MCF 10A (cell line): ENCODE measurements at regions of chr5 and their contacts with region 1.

Region 1: GRCh38 chr5:141849375-141850243 is 28.6 kb downstream of the PCDH1 start:
- DNase-seq: peak; percentile 88
- H3K4me3 Mint-ChIP-seq: peak overlapping the region; percentile 81
- H3K27ac Mint-ChIP-seq: peak overlapping the region; percentile 75
- H3K4me1 Mint-ChIP-seq: peaks cover 16% of the 10 kb centered on the region
- H3K27me3 Mint-ChIP-seq: no peaks in the 10 kb centered on the region
- CTCF ChIP-seq: no peak

Region 2: DNA sequence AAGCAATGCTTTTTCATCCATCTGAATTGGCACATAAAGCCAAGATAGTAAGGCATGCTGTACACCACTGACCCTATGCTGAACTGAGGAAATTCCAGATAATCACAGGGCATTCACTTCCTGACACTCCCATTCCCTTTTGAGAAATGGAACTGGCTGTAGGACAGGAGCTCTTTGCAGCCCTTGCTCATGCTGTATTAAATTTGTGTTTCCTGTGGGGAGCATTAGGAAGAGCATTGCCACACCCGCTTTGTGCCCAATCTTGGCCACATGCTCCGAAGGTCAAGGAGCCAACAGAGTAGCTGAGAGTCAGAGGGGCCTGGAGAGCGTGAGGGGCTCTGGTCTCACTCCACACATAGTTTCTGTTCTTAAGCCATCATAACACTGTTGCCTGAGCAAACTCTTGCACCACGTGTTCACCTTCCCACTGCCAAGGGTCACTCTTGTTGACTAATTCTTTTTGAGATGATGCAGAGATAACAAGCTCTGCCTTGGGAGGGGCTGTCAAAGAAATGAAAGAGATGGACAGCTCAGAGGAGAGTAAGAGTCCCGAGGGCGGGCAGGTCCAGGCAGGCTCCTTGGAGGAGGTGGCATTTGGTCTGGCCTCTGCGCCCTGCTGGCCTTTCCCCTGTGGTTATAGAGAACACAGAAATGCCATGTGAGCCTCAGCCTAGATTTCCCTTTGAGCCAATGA is 135.8 kb before region 1 on chr5:
- CTCF ChIA-PET with region 1: no interaction called
- POLR2A ChIA-PET with region 1: interaction called, 12 read pairs
- intact Hi-C with region 1: no loop called
- DNase-seq: peak; percentile 96
- H3K4me3 Mint-ChIP-seq: peak overlapping the region; percentile 5
- H3K27ac Mint-ChIP-seq: peak overlapping the region; percentile 73
- H3K4me1 Mint-ChIP-seq: peaks cover 37% of the 10 kb centered on the region
- H3K27me3 Mint-ChIP-seq: no peaks in the 10 kb centered on the region
- CTCF ChIP-seq: no peak

Region 3: GRCh38 chr5:141825791-141826560 is 23.6 kb before region 1 on chr5:
- CTCF ChIA-PET with region 1: no interaction called
- POLR2A ChIA-PET with region 1: no interaction called
- intact Hi-C with region 1: loop called (anchors 2 kb)
- DNase-seq: peak; percentile 56
- H3K4me3 Mint-ChIP-seq: no peak overlapping the region
- H3K27ac Mint-ChIP-seq: no peak overlapping the region
- H3K4me1 Mint-ChIP-seq: peaks cover 13% of the 10 kb centered on the region
- H3K27me3 Mint-ChIP-seq: no peaks in the 10 kb centered on the region
- CTCF ChIP-seq: peak; percentile 32

Region 4: GRCh38 chr5:141839015-141839513 is 10.5 kb before region 1 on chr5:
- CTCF ChIA-PET with region 1: no interaction called
- POLR2A ChIA-PET with region 1: interaction called, 11 read pairs
- intact Hi-C with region 1: no loop called
- DNase-seq: no peak
- H3K4me3 Mint-ChIP-seq: no peak overlapping the region
- H3K27ac Mint-ChIP-seq: no peak overlapping the region
- H3K4me1 Mint-ChIP-seq: peaks cover 20% of the 10 kb centered on the region
- H3K27me3 Mint-ChIP-seq: no peaks in the 10 kb centered on the region
- CTCF ChIP-seq: no peak

Region 5: DNA sequence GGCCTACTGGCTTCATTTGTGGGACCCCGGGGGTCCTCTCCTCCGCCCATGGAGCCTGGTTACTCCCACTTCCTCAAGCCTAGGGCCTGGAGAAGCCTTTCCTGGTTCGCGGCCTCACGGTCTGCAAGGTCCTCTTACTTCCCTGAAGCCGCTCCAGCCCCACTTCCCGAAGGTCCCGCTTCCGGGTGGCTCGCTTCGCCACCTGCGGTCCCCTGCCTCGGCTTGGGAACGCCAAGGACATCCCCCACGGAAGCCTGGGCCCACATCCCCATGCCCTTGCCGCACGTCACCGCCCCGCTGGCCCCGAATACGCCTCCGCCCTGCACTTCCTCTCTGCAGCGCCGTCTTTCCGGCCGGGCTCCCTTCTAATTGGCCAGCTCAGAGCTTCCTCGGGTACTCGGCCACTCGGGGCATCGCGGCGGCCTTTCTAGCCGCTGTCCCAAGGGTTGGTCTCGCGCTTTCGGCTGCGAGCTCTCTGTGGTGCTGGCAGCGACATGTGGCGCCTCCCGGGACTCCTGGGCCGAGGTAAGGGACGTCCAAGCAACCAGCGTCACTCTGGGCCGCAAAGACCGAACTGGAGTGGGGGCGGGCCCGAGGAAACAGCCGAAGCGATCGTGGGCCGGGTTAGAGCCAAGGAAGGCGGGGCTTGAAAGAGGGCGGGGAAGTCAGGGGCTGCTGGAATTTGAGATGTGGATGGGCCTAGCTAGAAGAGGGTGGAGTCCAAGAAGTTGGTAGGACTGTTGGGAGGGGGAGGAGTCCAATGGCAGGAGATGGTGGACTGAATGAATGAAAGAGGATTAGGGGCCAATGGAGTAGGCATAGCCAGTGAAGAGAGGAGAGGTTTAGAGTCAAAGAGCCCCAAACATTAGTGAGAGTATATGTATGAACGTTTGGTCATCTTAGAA is 74.1 kb after region 1 on chr5 and contains the start of gene DELE1:
- CTCF ChIA-PET with region 1: interaction called, 4 read pairs
- POLR2A ChIA-PET with region 1: interaction called, 13 read pairs
- intact Hi-C with region 1: no loop called
- DNase-seq: peak; percentile 98
- H3K4me3 Mint-ChIP-seq: peak within 1 kb of the TSS; percentile 75
- H3K27ac Mint-ChIP-seq: peak within 1 kb of the TSS; percentile 94
- H3K4me1 Mint-ChIP-seq: peaks cover 11% of the 10 kb centered on the region
- H3K27me3 Mint-ChIP-seq: no peaks in the 10 kb centered on the region
- CTCF ChIP-seq: no peak
- total RNA-seq, gene DELE1: 88.1 and 91.3 TPM in 2 replicates